Left lung (tissue), 14 donors: ENCODE measurements at regions of chr11 and their contacts with region 1.

Region 1: DNA sequence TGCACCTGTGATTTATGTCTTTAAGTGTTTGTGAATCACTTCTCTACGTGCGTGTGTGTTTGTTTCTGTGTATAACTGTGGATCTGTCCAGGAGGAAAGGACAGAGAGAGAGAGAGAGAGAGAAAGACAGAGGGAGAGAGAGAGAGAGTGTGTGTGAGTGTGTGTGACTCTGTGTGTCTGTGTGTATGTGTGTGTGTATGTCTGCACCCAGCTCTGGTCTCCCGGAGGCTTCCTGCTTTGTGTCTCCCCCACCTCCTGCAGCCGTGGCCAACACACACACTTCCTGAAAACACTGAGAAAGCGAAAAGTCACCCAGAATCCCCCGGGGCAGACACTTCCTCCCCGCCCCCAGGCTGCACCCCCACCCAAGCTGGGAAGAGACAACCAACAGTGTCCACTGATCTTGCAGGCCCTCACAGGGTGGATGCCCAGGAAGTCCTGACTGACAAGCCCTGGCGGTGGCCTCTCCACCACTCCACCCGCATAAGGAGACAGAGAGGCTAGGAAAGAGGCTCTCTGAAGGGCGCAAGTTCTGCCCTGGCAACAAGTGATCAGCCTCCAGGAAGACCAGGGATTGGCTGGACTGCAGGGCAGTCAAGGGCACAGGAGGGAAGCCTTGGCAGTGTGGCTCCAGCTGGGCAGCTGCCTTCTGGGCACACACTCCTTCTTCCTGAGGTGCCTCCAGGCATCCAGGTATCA is 30.0 kb downstream of the ARAP1 start:
- DNase-seq: peak; percentile 90 to 93 (median 92)
- ATAC-seq: peak; percentile 76
- H3K4me3 ChIP-seq: peak overlapping the region; percentile 42 to 65
- H3K27ac ChIP-seq: peak overlapping the region; percentile 87 to 92
- H3K4me1 ChIP-seq: peaks cover 42 to 96% of the 10 kb centered on the region in 2 donors
- H3K27me3 ChIP-seq: no peaks in the 10 kb centered on the region
- CTCF ChIP-seq: no peak

Region 2: GRCh38 chr11:72793425-72794367 is 71.5 kb after region 1 on chr11 and contains the start of gene STARD10:
- intact Hi-C with region 1: loop called in 1 of 2 experiments (anchors 5 kb)
- DNase-seq: peak; percentile 95 to 98 (median 98)
- ATAC-seq: peak; percentile 97
- H3K4me3 ChIP-seq: peak within 1 kb of the TSS; percentile 57 to 60
- H3K27ac ChIP-seq: peak within 1 kb of the TSS; percentile 90 to 92
- H3K4me1 ChIP-seq: peaks cover 0 to 41% of the 10 kb centered on the region in 2 donors
- H3K27me3 ChIP-seq: no peaks in the 10 kb centered on the region
- CTCF ChIP-seq: peak; percentile 96 to 99
- polyA plus RNA-seq, gene STARD10: 101 to 146 (median 114) TPM

Region 3: GRCh38 chr11:72814286-72815109 is 92.3 kb after region 1 on chr11 and contains the start of gene ATG16L2:
- intact Hi-C with region 1: loop called in 1 of 2 experiments (anchors 5 kb)
- DNase-seq: peak; percentile 78 to 97 (median 89)
- ATAC-seq: peak; percentile 91
- H3K4me3 ChIP-seq: peak within 1 kb of the TSS; percentile 79 to 98
- H3K27ac ChIP-seq: peak within 1 kb of the TSS; percentile 86 to 98
- H3K4me1 ChIP-seq: peaks cover 30 to 71% of the 10 kb centered on the region in 2 donors
- H3K27me3 ChIP-seq: no peaks in the 10 kb centered on the region
- CTCF ChIP-seq: peak; percentile 24 to 46
- polyA plus RNA-seq, gene ATG16L2: 43.1 to 56.5 (median 50.3) TPM

Region 4: DNA sequence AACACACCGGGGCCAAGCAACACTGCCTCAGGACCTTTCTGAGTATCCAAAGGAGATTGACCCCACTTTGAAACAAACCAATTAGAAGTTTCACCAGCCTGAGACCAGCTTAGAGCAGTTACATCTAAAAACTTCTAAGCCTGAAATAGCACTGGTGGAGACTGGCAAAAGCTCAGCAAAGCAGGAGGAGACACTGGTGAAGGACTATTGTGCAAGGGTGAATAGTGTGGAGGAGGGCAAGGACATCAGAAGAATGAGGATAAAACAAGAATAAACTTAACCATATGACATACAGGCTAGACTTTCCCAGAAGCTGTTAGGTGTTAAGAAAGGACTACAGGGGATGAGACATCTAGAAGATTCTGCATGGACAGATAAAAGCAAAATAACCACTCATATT is 267.5 kb after region 1 on chr11:
- intact Hi-C with region 1: no loop called
- DNase-seq: no peak
- ATAC-seq: peak; percentile 58
- H3K4me3 ChIP-seq: no peak overlapping the region
- H3K27ac ChIP-seq: peak overlapping the region in 1 of 2 donors; percentile 83
- H3K4me1 ChIP-seq: peaks cover 0 to 52% of the 10 kb centered on the region in 2 donors
- H3K27me3 ChIP-seq: no peaks in the 10 kb centered on the region
- CTCF ChIP-seq: no peak